CD8-positive, alpha-beta T cell (primary cell): ENCODE measurements at regions of chr19 and their contacts with region 1.

Region 1: DNA sequence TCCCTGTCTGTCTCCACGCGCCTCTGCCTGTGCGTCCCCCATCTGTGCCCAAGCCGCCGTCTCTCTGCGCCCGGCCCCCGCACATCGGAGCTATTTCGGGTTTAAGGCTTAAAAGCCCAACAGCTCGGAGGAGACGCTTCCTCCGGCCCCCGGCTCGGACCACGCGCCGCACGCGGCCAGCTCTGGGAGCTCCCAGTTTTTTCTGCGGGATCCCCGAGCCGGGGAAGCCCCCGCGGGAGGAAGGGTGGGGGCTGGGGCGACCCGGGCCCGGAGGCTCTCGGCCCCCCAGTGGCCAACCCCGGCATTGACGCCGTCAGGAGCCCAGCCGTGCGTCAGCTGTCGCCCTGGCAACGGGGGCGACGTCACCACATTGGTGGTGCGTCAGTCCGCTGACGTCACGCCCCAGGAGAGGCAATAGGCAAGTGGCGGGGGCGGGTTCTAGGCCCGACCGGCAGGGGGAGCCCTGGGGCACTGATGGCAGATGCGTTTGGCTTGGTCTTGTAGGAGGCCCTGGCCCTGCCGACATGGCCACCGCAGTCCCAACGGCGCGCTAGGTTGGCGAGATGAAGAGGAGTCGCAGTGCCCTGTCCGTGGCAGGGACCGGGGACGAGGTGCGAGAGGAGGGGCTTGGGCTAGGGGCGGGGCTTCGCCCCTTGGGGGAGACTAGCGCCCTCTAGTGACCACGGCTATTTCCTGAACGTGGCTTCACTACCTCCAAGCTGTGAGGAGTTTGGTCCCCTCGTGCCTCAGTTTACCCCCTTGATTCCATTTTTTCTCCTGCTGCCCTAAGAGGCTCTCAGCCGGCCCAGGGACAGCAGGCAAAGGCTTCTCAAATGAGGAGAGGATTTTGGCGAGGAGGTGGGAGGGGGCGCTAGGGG is 3.7 kb upstream of the PDE4A start:
- DNase-seq: peak; percentile 76 to 100 (median 98)
- ATAC-seq: peak; percentile 63
- H3K4me3 ChIP-seq: peak overlapping the region; percentile 57 to 63
- H3K4me3 Mint-ChIP-seq: peak overlapping the region; percentile 71
- H3K27ac ChIP-seq: peak overlapping the region; percentile 55 to 88
- H3K27ac Mint-ChIP-seq: peak overlapping the region; percentile 91
- H3K4me1 ChIP-seq: peaks cover 65% of the 10 kb centered on the region
- H3K4me1 Mint-ChIP-seq: peaks cover 54% of the 10 kb centered on the region
- H3K27me3 ChIP-seq: peaks cover 33 to 40% of the 10 kb centered on the region in 2 experiments
- H3K27me3 Mint-ChIP-seq: peaks cover 30% of the 10 kb centered on the region
- CTCF ChIP-seq: peak; percentile 100

Region 2: GRCh38 chr19:10069046-10069445 is 347.6 kb before region 1 on chr19:
- CTCF ChIA-PET with region 1: no interaction called
- POLR2A ChIA-PET with region 1: no interaction called
- intact Hi-C with region 1: no loop called
- DNase-seq: no peak
- ATAC-seq: no peak
- H3K4me3 ChIP-seq: no peak overlapping the region
- H3K4me3 Mint-ChIP-seq: no peak overlapping the region
- H3K27ac ChIP-seq: no peak overlapping the region
- H3K27ac Mint-ChIP-seq: no peak overlapping the region
- H3K4me1 ChIP-seq: no peaks in the 10 kb centered on the region
- H3K4me1 Mint-ChIP-seq: peaks cover 5% of the 10 kb centered on the region
- H3K27me3 ChIP-seq: no peaks in the 10 kb centered on the region
- H3K27me3 Mint-ChIP-seq: peaks cover 3% of the 10 kb centered on the region
- CTCF ChIP-seq: no peak

Region 3: GRCh38 chr19:10259162-10259905 is 157.3 kb before region 1 on chr19:
- CTCF ChIA-PET with region 1: interaction called, 10 read pairs
- POLR2A ChIA-PET with region 1: no interaction called
- intact Hi-C with region 1: no loop called
- DNase-seq: peak; percentile 68 to 93 (median 86)
- ATAC-seq: peak; percentile 98
- H3K4me3 ChIP-seq: no peak overlapping the region
- H3K4me3 Mint-ChIP-seq: no peak overlapping the region
- H3K27ac ChIP-seq: no peak overlapping the region
- H3K27ac Mint-ChIP-seq: no peak overlapping the region
- H3K4me1 ChIP-seq: no peaks in the 10 kb centered on the region
- H3K4me1 Mint-ChIP-seq: peaks cover 5% of the 10 kb centered on the region
- H3K27me3 ChIP-seq: no peaks in the 10 kb centered on the region
- H3K27me3 Mint-ChIP-seq: no peaks in the 10 kb centered on the region
- CTCF ChIP-seq: peak; percentile 58

Region 4: GRCh38 chr19:10431943-10432735 is 15.5 kb after region 1 on chr19:
- CTCF ChIA-PET with region 1: interaction called, 620 read pairs
- POLR2A ChIA-PET with region 1: interaction called, 5 read pairs
- intact Hi-C with region 1: loop called (anchors 1 to 2 kb)
- DNase-seq: peak in 8 of 9 experiments; percentile 60 to 90 (median 78)
- ATAC-seq: peak; percentile 35
- H3K4me3 ChIP-seq: peak overlapping the region; percentile 44 to 52
- H3K4me3 Mint-ChIP-seq: peak overlapping the region; percentile 87
- H3K27ac ChIP-seq: peak overlapping the region; percentile 43 to 77
- H3K27ac Mint-ChIP-seq: peak overlapping the region; percentile 92
- H3K4me1 ChIP-seq: peaks cover 37% of the 10 kb centered on the region
- H3K4me1 Mint-ChIP-seq: peaks cover 50% of the 10 kb centered on the region
- H3K27me3 ChIP-seq: peaks cover 0 to 7% of the 10 kb centered on the region in 2 experiments
- H3K27me3 Mint-ChIP-seq: peaks cover 23% of the 10 kb centered on the region
- CTCF ChIP-seq: no peak

Region 5: DNA sequence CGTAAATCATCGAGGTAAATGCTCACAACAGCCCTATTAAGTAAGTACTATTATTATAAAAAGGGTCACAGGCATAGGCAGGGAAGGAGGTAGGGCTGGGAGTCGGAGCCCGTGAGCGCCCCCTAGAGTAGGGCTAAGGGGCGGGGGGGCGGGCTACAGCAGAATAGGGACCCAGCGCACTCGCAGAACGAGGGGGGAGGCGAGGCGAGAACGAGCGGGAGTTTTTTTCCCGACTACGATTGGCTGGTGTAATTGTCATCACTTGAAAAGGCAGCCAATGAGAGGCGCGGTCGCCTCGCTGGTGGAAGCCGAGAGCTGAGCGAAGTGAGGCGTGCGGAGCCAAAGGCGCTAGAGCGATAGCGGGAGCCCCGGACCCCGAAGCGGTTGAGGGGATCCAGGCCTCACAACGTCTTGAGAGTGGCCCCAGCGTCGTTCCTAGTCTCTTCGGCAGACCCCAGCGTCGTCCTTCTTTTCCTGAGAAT is 62.3 kb after region 1 on chr19:
- CTCF ChIA-PET with region 1: interaction called, 4 read pairs
- POLR2A ChIA-PET with region 1: interaction called, 3 read pairs
- intact Hi-C with region 1: loop called in 1 of 2 experiments (anchors 5 kb)
- DNase-seq: peak; percentile 75 to 96 (median 88)
- ATAC-seq: peak; percentile 97
- H3K4me3 ChIP-seq: peak overlapping the region; percentile 27 to 28
- H3K4me3 Mint-ChIP-seq: peak overlapping the region; percentile 70
- H3K27ac ChIP-seq: no peak overlapping the region
- H3K27ac Mint-ChIP-seq: no peak overlapping the region
- H3K4me1 ChIP-seq: peaks cover 10% of the 10 kb centered on the region
- H3K4me1 Mint-ChIP-seq: peaks cover 14% of the 10 kb centered on the region
- H3K27me3 ChIP-seq: no peaks in the 10 kb centered on the region
- H3K27me3 Mint-ChIP-seq: no peaks in the 10 kb centered on the region
- CTCF ChIP-seq: peak; percentile 74